ENCODE measurements at regions of chrX and their contacts with region 1.

Region 1: GRCh38 chrX:129606918-129607317 is 47.8 kb downstream of the APLN start:
- DNase-seq: peak in 4 of 5 donors; percentile 35 to 47 (median 40)
- ATAC-seq: peak in 3 of 4 donors; percentile 48 to 72 (median 64)
- H3K4me3 ChIP-seq: no peak overlapping the region
- H3K27ac ChIP-seq: peak overlapping the region in 1 of 12 donors; percentile 19
- H3K4me1 ChIP-seq: peaks cover 0 to 18% (median 5%) of the 10 kb centered on the region in 12 donors
- H3K27me3 ChIP-seq: no peaks in the 10 kb centered on the region
- CTCF ChIP-seq: peak; percentile 52 to 78 (median 65)
- POLR2A ChIP-seq: no peak

Region 2: DNA sequence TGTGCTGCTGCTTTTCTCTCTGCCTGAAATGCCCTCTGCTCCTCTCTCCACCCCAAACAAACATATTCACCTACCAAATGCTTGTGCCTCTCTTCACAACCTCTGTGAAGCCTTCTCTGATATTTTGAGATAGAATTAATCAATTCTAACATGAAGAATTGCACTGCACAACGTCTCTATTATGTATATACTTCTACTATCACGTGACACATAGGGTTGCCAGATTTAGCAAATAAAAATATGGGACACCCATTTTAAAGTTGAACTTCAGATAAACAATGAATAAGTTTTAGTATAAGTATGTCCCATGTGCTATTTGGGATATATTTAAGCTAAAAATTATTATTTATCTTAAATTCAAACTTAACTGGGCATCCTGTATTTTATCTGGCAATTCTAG is 237.7 kb before region 1 on chrX:
- intact Hi-C with region 1: no loop called
- DNase-seq: no peak
- ATAC-seq: no peak
- H3K4me3 ChIP-seq: no peak overlapping the region
- H3K27ac ChIP-seq: no peak overlapping the region
- H3K4me1 ChIP-seq: no peaks in the 10 kb centered on the region
- H3K27me3 ChIP-seq: no peaks in the 10 kb centered on the region
- CTCF ChIP-seq: no peak
- POLR2A ChIP-seq: no peak

Region 3: DNA sequence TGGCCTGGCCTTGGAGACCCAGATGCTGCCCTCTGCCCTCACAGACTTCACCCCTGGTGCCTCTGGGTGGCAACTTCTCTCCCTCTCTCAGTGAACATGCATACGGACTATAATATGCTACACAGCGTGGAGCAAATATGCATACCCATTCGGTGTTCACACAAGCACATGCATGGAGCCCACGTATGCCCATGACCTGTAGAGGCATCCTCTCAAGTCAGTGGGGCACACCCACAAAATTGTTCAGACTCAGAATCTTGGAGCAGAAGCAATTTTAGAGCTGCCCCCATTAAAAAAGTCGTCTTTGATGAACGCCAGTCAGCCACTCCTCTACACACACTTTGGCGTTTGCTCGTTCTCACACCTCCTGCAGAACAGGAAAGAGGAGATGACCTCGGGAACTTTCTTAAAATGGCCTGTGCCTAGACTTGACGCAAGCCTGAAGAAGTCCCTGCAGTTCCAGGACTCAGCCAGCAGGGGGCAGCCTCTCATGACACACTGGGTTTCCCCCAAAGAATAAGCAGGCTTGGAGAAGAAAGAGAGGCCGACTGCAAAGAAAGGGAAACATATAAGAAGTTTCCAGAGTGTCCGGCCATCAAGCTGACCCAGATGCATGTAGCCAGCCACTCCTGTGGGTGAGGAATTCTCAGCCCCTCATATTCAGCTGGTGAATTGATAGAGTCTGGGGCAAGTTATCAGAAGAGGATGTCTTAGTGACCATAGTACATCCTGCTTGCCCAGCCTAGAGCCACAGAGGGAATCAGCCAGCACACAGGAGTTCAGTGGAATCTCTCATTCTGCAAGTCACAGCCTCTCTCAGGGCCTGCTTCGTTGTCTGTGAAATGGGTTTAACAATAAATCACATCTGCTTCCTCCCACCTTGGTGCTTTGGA is 30.5 kb after region 1 on chrX:
- intact Hi-C with region 1: loop called in 1 of 10 experiments (anchors 2 kb)
- DNase-seq: peak; percentile 50 to 77 (median 61)
- ATAC-seq: peak; percentile 55 to 79 (median 73)
- H3K4me3 ChIP-seq: no peak overlapping the region
- H3K27ac ChIP-seq: no peak overlapping the region
- H3K4me1 ChIP-seq: peaks cover 0 to 7% (median 0%) of the 10 kb centered on the region in 12 donors
- H3K27me3 ChIP-seq: peaks cover 0 to 7% (median 0%) of the 10 kb centered on the region in 9 donors
- CTCF ChIP-seq: peak; percentile 76 to 92 (median 83)
- POLR2A ChIP-seq: no peak

Region 4: DNA sequence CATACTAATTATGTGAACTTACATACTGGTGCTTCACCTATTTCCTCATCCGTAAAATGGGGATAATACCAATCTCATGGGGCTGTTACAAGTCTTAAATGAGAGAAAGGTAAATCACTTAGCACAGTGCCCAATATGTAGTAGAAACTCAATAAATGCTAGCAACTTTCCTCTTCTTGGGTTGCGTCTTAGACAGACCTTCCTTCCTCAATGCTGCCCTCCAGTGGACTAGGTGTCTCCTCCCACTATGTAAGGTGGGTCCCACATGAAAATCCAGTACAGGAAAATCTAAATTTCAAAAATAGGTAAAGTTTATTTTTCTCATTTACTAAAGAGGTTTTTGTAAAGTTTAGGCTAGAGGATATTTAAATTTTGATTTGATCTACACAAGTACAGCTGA is 216.2 kb after region 1 on chrX:
- intact Hi-C with region 1: loop called in 6 of 10 experiments (anchors 2 to 10 kb)
- DNase-seq: peak in 2 of 5 donors; percentile 13 to 30
- ATAC-seq: peak in 2 of 4 donors; percentile 34 to 65
- H3K4me3 ChIP-seq: no peak overlapping the region
- H3K27ac ChIP-seq: no peak overlapping the region
- H3K4me1 ChIP-seq: no peaks in the 10 kb centered on the region
- H3K27me3 ChIP-seq: no peaks in the 10 kb centered on the region
- CTCF ChIP-seq: peak in 11 of 12 donors; percentile 15 to 58 (median 44)
- POLR2A ChIP-seq: no peak

Region 5: DNA sequence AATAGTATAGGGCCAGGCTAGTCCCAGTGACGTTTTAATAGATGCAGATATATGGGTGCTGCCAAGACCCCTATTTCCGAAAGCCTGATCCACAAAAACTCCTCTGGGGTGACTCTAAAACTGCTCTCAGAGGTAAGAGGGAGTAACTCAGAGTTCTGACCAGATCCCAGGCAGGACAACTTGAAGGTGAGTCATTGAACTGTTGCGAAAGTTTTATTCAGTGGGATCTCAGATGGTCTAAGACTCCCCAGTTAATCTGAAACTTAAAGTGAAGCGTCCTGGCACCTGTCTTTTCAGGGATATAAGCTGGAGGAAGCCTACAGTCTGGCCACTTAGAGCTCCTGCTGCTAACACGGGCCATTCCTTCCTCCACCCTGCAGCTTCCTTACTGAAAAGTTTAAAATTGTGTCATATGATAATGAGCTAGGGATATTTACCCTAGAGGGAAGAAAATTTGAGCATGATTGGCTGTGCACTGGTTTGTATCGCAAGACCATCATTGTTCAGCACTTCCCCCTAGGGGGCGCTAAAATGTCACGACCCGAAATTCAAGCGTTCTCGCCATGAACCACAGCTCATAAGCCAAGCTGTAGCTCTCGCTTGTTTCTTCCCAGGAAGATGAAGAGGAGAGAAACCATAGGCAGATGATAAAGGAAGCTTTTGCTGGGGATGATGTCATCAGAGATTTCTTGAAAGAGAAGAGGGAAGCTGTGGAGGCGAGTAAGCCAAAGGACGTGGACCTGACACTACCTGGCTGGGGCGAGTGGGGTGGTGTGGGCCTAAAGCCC is 318.6 kb after region 1 on chrX:
- intact Hi-C with region 1: loop called in 2 of 10 experiments (anchors 10 kb)
- DNase-seq: peak in 4 of 5 donors; percentile 50 to 69 (median 60)
- ATAC-seq: peak in 3 of 4 donors; percentile 75 to 83 (median 83)
- H3K4me3 ChIP-seq: no peak overlapping the region
- H3K27ac ChIP-seq: no peak overlapping the region
- H3K4me1 ChIP-seq: peaks cover 0 to 2% (median 0%) of the 10 kb centered on the region in 12 donors
- H3K27me3 ChIP-seq: no peaks in the 10 kb centered on the region
- CTCF ChIP-seq: peak; percentile 55 to 72 (median 62)
- POLR2A ChIP-seq: no peak

Region 6: DNA sequence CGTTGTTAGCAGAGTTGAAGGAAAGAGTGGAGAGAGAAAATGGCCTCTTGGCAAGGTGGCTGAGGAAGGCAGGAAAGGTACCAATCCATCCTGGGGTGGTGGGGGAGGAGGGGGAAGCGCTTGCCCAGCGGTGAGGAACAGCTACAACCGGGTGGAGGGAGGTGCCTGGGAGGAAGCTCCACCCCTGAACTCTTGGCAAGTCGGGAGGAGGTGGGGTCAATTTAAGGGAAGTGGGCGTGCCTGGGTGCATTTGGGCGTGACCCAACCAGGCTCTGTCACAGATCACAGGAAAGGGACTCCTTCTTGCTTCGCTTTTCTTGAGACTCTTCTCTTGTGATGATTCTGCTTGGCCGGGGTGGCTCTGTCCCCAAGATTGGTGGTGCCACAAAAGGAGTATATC is 417.2 kb after region 1 on chrX:
- intact Hi-C with region 1: loop called in 2 of 10 experiments (anchors 10 kb)
- DNase-seq: peak; percentile 76 to 82 (median 81)
- ATAC-seq: peak; percentile 80 to 98 (median 92)
- H3K4me3 ChIP-seq: no peak overlapping the region
- H3K27ac ChIP-seq: peak overlapping the region in 4 of 12 donors; percentile 6 to 41 (median 26)
- H3K4me1 ChIP-seq: peaks cover 0 to 14% (median 5%) of the 10 kb centered on the region in 12 donors
- H3K27me3 ChIP-seq: no peaks in the 10 kb centered on the region
- CTCF ChIP-seq: no peak
- POLR2A ChIP-seq: no peak

Region 7: GRCh38 chrX:130060122-130061069 is 453.5 kb after region 1 on chrX:
- intact Hi-C with region 1: loop called in 9 of 10 experiments (anchors 1 to 10 kb)
- DNase-seq: peak; percentile 74 to 92 (median 81)
- ATAC-seq: peak; percentile 81 to 94 (median 92)
- H3K4me3 ChIP-seq: peak overlapping the region; percentile 21 to 67 (median 55)
- H3K27ac ChIP-seq: peak overlapping the region in 11 of 12 donors; percentile 18 to 77 (median 43)
- H3K4me1 ChIP-seq: peaks cover 0 to 6% (median 0%) of the 10 kb centered on the region in 12 donors
- H3K27me3 ChIP-seq: no peaks in the 10 kb centered on the region
- CTCF ChIP-seq: peak; percentile 74 to 90 (median 80)
- POLR2A ChIP-seq: peak in 1 of 2 donors; percentile 9

Region 8: GRCh38 chrX:130916636-130917422 is 1309.9 kb after region 1 on chrX:
- intact Hi-C with region 1: loop called in 2 of 10 experiments (anchors 10 kb)
- DNase-seq: peak in 3 of 5 donors; percentile 22 to 40 (median 29)
- ATAC-seq: peak in 2 of 4 donors; percentile 53 to 62
- H3K4me3 ChIP-seq: no peak overlapping the region
- H3K27ac ChIP-seq: no peak overlapping the region
- H3K4me1 ChIP-seq: no peaks in the 10 kb centered on the region
- H3K27me3 ChIP-seq: peaks cover 0 to 22% (median 0%) of the 10 kb centered on the region in 9 donors
- CTCF ChIP-seq: peak; percentile 52 to 80 (median 66)
- POLR2A ChIP-seq: no peak